PC-9 (cell line): ENCODE measurements at regions of chrX and their contacts with region 1.

Region 1: DNA sequence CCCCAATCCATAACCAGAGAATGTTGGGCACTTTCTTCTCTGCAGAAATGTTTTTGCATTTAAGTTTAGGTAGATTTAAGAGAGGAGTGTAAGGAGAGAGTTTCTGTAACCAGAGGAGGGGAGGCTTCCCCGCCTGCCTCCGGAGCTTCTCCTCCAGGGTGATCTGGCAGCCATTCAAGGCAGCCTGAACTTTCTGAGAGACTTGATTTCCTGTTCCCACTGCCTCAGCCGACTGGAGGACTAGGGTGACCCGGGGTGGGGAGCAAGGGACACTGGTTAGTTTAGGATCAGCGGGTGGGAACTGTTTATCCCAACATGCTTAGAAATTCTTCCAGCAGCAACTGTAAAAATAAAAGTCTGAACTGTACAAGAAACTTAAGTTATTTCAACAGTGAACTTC is 15.1 kb downstream of the FAM9C start:
- DNase-seq: peak; percentile 74 to 81
- H3K4me3 ChIP-seq: peak overlapping the region; percentile 37; the same call in 1 of the 2 replicates
- H3K27ac ChIP-seq: peak overlapping the region; percentile 99
- H3K4me1 ChIP-seq: peaks cover 56% of the 10 kb centered on the region
- H3K27me3 ChIP-seq: no peaks in the 10 kb centered on the region
- CTCF ChIP-seq: no peak

Region 2: GRCh38 chrX:12741439-12741838 is 287.9 kb before region 1 on chrX:
- CTCF ChIA-PET with region 1: no interaction called
- POLR2A ChIA-PET with region 1: no interaction called
- intact Hi-C with region 1: no loop called
- DNase-seq: peak; percentile 60 to 81
- H3K4me3 ChIP-seq: no peak overlapping the region
- H3K27ac ChIP-seq: no peak overlapping the region
- H3K4me1 ChIP-seq: peaks cover 15% of the 10 kb centered on the region
- H3K27me3 ChIP-seq: no peaks in the 10 kb centered on the region
- CTCF ChIP-seq: no peak

Region 3: DNA sequence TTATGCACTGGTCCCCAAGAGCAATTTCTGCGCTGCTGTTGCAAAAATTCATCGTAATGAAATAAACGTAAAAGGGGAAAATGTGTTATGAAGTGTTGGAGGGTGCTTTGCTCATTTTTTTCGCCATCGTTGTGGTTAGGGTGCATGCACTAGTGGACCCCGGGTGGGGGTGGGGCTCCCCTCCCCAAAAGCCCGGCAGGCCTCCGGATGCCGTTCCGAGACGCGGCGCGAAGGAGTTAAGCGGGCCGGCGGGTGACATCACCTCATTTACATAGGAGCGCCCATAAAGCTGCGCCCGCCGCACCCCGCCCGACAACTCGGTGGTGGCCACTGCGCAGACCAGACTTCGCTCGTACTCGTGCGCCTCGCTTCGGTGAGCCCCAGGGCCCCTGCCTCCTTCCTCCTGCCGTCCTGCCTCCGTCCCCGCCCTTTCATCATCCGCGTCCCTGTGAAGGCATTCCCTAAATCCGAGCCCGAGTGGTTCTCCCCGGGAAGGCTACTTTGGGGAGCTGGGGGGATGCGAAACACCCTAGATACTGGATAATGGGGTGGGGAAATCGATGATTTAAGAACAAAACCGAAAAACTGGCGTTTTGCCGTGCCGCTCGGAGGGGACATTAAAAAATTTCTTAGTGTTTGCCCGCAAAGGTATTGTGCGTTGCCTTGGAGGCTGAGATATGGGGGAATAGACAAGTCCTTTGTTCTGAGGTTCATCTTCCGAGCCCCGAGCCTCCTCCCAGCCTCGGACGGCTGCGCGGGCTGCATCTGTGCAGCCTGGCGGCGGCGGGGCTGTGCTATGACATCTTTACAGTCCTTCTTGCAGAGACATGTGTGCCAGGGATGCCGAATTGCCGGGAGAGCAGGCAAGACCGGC is 54.3 kb before region 1 on chrX and contains the start of gene TMSB4X:
- CTCF ChIA-PET with region 1: interaction called, 3 read pairs
- POLR2A ChIA-PET with region 1: interaction called, 4 read pairs
- intact Hi-C with region 1: loop called (anchors 1 kb)
- DNase-seq: peak; percentile 71 to 85
- H3K4me3 ChIP-seq: peak within 1 kb of the TSS; percentile 99
- H3K27ac ChIP-seq: peak within 1 kb of the TSS; percentile 99
- H3K4me1 ChIP-seq: peaks cover 36% of the 10 kb centered on the region
- H3K27me3 ChIP-seq: no peaks in the 10 kb centered on the region
- CTCF ChIP-seq: no peak
- total RNA-seq, gene TMSB4X: 2,589 and 3,588 TPM in 2 replicates

Region 4: DNA sequence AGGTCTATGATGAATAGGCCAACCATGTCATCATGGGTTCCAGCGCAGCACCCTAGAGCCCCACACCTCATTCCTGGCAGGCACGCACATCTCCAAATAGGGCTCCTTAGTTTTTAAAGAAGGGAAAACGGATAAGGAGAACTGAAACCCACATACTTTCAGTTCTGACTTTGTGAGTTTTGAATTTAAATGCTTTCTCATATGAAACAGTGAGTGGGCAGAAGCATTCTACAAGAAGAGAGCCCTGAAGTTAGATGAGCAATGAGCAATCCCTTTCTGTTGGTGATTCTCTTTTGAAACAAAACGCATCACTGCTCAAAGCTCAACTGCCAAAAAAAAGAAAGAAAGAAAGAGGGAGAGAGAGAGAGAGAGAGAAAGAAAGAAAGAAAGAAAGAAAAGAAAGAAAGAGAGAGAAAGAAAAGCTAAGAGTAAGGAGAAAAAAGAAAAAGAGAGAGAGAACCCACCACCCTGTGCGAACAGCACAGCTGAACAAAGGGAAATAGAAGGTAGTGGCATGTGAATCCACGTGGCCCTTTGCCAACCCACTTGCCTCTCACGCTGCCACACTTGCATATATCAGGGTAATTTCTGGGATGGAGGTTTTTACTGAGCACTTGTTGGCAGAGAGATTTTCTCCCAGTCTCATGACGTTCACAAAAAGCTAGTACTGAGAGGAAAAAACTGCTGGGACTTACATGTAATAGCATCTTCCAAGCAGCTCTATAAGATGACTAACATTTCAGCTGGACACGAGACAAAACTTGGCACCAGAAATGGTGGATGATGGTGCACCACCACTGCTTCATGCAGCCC is 23.5 kb before region 1 on chrX:
- CTCF ChIA-PET with region 1: no interaction called
- POLR2A ChIA-PET with region 1: no interaction called
- intact Hi-C with region 1: loop called (anchors 2 kb)
- DNase-seq: no peak
- H3K4me3 ChIP-seq: no peak overlapping the region
- H3K27ac ChIP-seq: no peak overlapping the region
- H3K4me1 ChIP-seq: peaks cover 75% of the 10 kb centered on the region
- H3K27me3 ChIP-seq: no peaks in the 10 kb centered on the region
- CTCF ChIP-seq: no peak

Region 5: DNA sequence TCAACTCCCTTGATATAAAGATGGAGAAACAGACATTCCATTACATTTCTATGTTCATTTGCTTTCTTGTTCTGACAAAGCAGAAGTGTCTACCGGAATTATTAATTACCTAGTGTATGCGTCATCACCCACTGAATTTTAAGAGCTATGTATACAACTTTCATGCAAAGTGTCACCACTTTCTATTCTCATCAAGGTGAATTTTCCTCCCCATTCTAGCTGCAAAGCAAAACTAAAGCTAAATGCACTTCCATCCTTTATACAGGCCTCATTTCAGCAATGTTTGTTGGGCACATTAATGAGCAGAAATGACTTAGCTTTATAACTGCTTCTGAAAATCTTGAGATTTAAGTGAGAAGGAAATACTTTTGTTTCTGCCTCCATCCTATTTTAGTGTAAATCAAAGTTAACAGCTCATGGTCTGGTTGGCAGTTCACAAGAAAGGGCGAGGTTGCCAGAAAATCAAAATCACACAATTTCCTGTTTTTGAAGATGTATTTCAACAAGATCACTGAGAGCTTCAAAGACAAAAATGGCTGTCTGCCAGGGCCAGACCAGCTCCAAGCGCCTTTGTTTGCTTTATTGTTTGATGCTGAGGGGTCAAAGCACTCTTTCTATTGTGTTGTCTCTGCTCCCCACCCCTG is 22.3 kb after region 1 on chrX:
- CTCF ChIA-PET with region 1: no interaction called
- POLR2A ChIA-PET with region 1: no interaction called
- intact Hi-C with region 1: no loop called
- DNase-seq: no peak
- H3K4me3 ChIP-seq: no peak overlapping the region
- H3K27ac ChIP-seq: no peak overlapping the region
- H3K4me1 ChIP-seq: peaks cover 3% of the 10 kb centered on the region; the same call in 1 of the 2 replicates
- H3K27me3 ChIP-seq: no peaks in the 10 kb centered on the region
- CTCF ChIP-seq: no peak

Region 6: GRCh38 chrX:13101441-13102139 is 72.2 kb after region 1 on chrX:
- CTCF ChIA-PET with region 1: no interaction called
- POLR2A ChIA-PET with region 1: no interaction called
- intact Hi-C with region 1: loop called (anchors 1 kb)
- DNase-seq: peak; percentile 72 to 93
- H3K4me3 ChIP-seq: no peak overlapping the region; the same call in 1 of the 2 replicates
- H3K27ac ChIP-seq: peak overlapping the region; percentile 96
- H3K4me1 ChIP-seq: peaks cover 48% of the 10 kb centered on the region
- H3K27me3 ChIP-seq: no peaks in the 10 kb centered on the region
- CTCF ChIP-seq: no peak

Region 7: GRCh38 chrX:13287816-13288215 is 258.5 kb after region 1 on chrX:
- CTCF ChIA-PET with region 1: no interaction called
- POLR2A ChIA-PET with region 1: no interaction called
- intact Hi-C with region 1: loop called (anchors 1 kb)
- DNase-seq: peak; percentile 11 to 37
- H3K4me3 ChIP-seq: no peak overlapping the region
- H3K27ac ChIP-seq: peak overlapping the region; percentile 57
- H3K4me1 ChIP-seq: peaks cover 21% of the 10 kb centered on the region
- H3K27me3 ChIP-seq: no peaks in the 10 kb centered on the region
- CTCF ChIP-seq: no peak